B cell (primary cell): ENCODE measurements at regions of chr12 and their contacts with region 1.

Region 1: DNA sequence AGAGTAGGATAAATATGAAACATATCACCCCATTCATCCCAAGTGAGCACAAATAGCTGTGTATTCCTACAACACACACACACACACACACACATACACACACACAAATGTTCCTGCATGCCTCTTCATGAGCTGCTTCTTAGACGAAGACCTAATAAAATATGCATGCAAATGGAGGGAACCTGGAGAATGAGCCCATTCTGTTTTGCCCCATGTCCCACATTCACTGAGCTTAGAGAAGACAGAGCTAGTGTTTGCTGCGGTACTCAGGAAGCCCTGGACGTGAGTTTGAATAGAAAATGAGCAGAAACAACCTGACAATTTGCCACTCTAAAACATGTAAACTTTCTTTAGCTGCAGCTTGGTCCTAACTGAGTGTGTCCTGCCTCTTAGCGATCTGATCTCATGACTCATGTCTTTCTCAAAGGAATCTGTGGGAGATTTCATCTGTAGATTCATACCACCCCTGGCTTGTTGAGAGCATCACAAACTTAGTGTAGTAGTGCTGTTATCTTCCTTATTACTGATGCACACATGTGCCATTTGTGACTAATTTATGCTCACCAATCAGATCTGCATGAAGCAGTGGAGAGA is 86.8 kb downstream of the ITPR2 start:
- DNase-seq: no peak
- ATAC-seq: no peak
- H3K4me3 ChIP-seq: no peak overlapping the region
- H3K4me3 Mint-ChIP-seq: no peak overlapping the region
- H3K27ac ChIP-seq: no peak overlapping the region
- H3K27ac Mint-ChIP-seq: no peak overlapping the region
- H3K4me1 ChIP-seq: peaks cover 9 to 14% of the 10 kb centered on the region in 2 donors
- H3K4me1 Mint-ChIP-seq: peaks cover 55% of the 10 kb centered on the region
- H3K27me3 ChIP-seq: no peaks in the 10 kb centered on the region
- H3K27me3 Mint-ChIP-seq: no peaks in the 10 kb centered on the region
- CTCF ChIP-seq: no peak

Region 2: DNA sequence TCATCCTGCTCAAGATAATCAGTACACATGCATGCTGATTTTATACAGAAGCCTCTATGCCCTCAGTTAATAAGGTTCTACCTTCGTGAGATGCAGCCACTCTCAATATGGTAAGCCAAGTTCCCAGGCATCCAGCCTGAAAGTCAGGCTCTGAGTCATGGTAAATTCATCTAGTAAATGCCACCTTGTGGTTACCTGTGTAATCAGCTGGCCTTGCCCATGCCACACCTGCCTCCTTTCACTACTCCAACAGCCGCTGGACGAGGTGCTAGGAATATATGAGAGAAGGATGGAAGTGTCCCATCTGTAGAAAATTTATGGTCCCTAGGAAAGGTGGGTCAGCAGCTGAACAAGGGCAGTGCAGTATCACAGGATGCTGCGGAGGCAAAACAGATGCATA is 343.6 kb before region 1 on chr12:
- CTCF ChIA-PET with region 1: no interaction called
- POLR2A ChIA-PET with region 1: no interaction called
- intact Hi-C with region 1: no loop called
- DNase-seq: peak; percentile 43
- ATAC-seq: peak; percentile 53
- H3K4me3 ChIP-seq: no peak overlapping the region
- H3K4me3 Mint-ChIP-seq: no peak overlapping the region
- H3K27ac ChIP-seq: no peak overlapping the region
- H3K27ac Mint-ChIP-seq: no peak overlapping the region
- H3K4me1 ChIP-seq: peaks cover 0 to 4% of the 10 kb centered on the region in 2 donors
- H3K4me1 Mint-ChIP-seq: peaks cover 2% of the 10 kb centered on the region
- H3K27me3 ChIP-seq: no peaks in the 10 kb centered on the region
- H3K27me3 Mint-ChIP-seq: no peaks in the 10 kb centered on the region
- CTCF ChIP-seq: peak; percentile 38

Region 3: GRCh38 chr12:26732005-26732908 is 14.0 kb before region 1 on chr12:
- CTCF ChIA-PET with region 1: no interaction called
- POLR2A ChIA-PET with region 1: no interaction called
- intact Hi-C with region 1: loop called (anchors 2 kb)
- DNase-seq: peak; percentile 60
- ATAC-seq: peak; percentile 78
- H3K4me3 ChIP-seq: no peak overlapping the region
- H3K4me3 Mint-ChIP-seq: peak overlapping the region; percentile 81
- H3K27ac ChIP-seq: peak overlapping the region; percentile 53 to 73
- H3K27ac Mint-ChIP-seq: peak overlapping the region; percentile 88
- H3K4me1 ChIP-seq: peaks cover 24 to 26% of the 10 kb centered on the region in 2 donors
- H3K4me1 Mint-ChIP-seq: peaks cover 69% of the 10 kb centered on the region
- H3K27me3 ChIP-seq: no peaks in the 10 kb centered on the region
- H3K27me3 Mint-ChIP-seq: no peaks in the 10 kb centered on the region
- CTCF ChIP-seq: no peak

Region 4: GRCh38 chr12:26773313-26774104 is 27.3 kb after region 1 on chr12:
- CTCF ChIA-PET with region 1: no interaction called
- POLR2A ChIA-PET with region 1: no interaction called
- intact Hi-C with region 1: loop called (anchors 2 kb)
- DNase-seq: no peak
- ATAC-seq: no peak
- H3K4me3 ChIP-seq: no peak overlapping the region
- H3K4me3 Mint-ChIP-seq: no peak overlapping the region
- H3K27ac ChIP-seq: no peak overlapping the region
- H3K27ac Mint-ChIP-seq: peak overlapping the region; percentile 28
- H3K4me1 ChIP-seq: peaks cover 18 to 20% of the 10 kb centered on the region in 2 donors
- H3K4me1 Mint-ChIP-seq: peaks cover 33% of the 10 kb centered on the region
- H3K27me3 ChIP-seq: no peaks in the 10 kb centered on the region
- H3K27me3 Mint-ChIP-seq: no peaks in the 10 kb centered on the region
- CTCF ChIP-seq: no peak

Region 5: DNA sequence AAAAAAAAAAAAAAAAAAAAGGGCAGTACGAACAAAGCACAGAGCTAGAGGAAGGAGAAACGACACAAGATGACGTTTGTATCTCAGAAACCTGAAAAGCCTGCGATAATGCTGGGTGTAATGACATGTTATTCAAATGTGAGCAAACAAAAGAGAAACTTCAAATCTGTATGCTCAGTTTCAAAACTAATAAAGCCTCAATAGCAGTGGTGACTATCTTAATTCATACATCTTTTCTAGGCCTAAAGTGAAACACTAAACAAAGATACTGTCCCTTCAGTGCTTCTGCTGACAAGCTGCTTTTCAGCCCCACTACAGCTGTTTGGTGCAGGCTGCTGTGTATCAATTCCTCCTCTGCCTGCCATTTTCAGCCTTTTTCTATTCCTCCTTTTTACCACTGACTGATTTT is 71.0 kb after region 1 on chr12:
- CTCF ChIA-PET with region 1: no interaction called
- POLR2A ChIA-PET with region 1: no interaction called
- intact Hi-C with region 1: no loop called
- DNase-seq: peak; percentile 53
- ATAC-seq: peak; percentile 62
- H3K4me3 ChIP-seq: no peak overlapping the region
- H3K4me3 Mint-ChIP-seq: peak overlapping the region; percentile 47
- H3K27ac ChIP-seq: peak overlapping the region; percentile 42 to 61
- H3K27ac Mint-ChIP-seq: peak overlapping the region; percentile 76
- H3K4me1 ChIP-seq: peaks cover 5% of the 10 kb centered on the region in 2 donors
- H3K4me1 Mint-ChIP-seq: peaks cover 28% of the 10 kb centered on the region
- H3K27me3 ChIP-seq: no peaks in the 10 kb centered on the region
- H3K27me3 Mint-ChIP-seq: no peaks in the 10 kb centered on the region
- CTCF ChIP-seq: no peak

Region 6: DNA sequence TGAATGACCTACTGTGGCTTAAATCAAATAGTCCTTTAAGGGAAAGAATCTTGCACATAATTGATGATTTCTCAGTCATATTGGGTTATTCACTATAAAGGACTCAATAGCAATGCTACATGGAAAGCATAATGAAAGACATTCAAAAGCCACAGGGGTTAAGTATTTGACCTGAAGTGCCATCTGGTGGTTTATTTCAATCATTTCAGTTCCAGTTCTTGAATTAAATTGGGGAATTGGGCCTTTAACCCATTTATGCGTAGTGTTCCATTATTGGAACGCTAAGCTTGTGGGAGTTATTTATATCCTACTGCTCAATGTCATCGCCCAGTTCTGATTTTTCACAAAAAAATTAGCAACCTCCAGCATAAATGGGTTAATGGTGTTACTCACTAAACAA is 377.4 kb after region 1 on chr12:
- CTCF ChIA-PET with region 1: no interaction called
- POLR2A ChIA-PET with region 1: no interaction called
- intact Hi-C with region 1: no loop called
- DNase-seq: peak; percentile 48
- ATAC-seq: no peak
- H3K4me3 ChIP-seq: no peak overlapping the region
- H3K4me3 Mint-ChIP-seq: no peak overlapping the region
- H3K27ac ChIP-seq: no peak overlapping the region
- H3K27ac Mint-ChIP-seq: no peak overlapping the region
- H3K4me1 ChIP-seq: no peaks in the 10 kb centered on the region
- H3K4me1 Mint-ChIP-seq: no peaks in the 10 kb centered on the region
- H3K27me3 ChIP-seq: no peaks in the 10 kb centered on the region
- H3K27me3 Mint-ChIP-seq: no peaks in the 10 kb centered on the region
- CTCF ChIP-seq: peak; percentile 58